CD4-positive, alpha-beta memory T cell (primary cell): ENCODE measurements at regions of chr5 and their contacts with region 1.

Region 1: DNA sequence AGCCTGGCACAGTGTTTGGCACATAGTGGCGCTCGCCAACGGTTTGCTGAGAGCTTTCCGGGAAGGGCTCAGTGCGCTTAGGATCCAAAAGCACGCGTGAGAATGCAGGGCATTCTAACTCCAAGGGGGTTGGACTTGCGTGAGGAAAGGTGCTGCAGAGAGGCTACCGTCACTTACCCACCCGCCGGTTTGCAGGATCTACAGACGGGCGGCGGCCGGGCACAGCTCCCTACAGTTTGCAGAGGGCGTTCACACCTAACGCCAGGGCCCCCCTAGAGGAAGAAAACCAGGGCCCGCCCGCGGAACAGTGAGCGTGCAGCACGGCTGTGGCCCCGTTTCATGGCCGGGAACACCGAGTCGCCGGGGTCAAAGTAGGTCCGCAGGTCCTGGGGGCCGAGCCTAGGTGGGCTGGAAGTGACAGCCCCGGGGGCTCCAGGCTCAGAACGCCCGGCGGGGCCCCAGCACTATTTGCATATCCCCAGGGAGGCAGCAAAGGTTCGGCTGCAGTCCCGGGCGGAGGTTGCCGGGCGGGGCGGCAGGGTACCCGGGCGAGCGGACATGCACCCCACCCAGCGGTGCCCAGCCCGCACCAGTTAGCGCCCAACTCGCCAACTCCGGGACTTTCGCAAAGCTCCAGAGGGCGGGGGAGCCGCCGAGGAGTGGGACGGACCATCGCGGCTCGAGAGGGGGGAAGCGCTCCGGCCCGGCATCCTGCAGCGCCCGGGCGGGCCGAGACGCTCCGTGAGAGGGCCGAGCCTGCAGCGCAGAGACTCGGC is 526 bp upstream of the GALNT10 start:
- DNase-seq: peak; percentile 82 to 87 (median 86)
- H3K4me3 ChIP-seq: peak overlapping the region; percentile 31 to 59
- H3K4me3 Mint-ChIP-seq: peak overlapping the region; percentile 88 to 95 (median 91)
- H3K27ac ChIP-seq: peak overlapping the region; percentile 64
- H3K27ac Mint-ChIP-seq: peak overlapping the region; percentile 68 to 90 (median 84)
- H3K4me1 ChIP-seq: peaks cover 36% of the 10 kb centered on the region
- H3K4me1 Mint-ChIP-seq: peaks cover 33 to 56% (median 42%) of the 10 kb centered on the region in 4 donors
- H3K27me3 ChIP-seq: no peaks in the 10 kb centered on the region
- H3K27me3 Mint-ChIP-seq: no peaks in the 10 kb centered on the region

Region 2: DNA sequence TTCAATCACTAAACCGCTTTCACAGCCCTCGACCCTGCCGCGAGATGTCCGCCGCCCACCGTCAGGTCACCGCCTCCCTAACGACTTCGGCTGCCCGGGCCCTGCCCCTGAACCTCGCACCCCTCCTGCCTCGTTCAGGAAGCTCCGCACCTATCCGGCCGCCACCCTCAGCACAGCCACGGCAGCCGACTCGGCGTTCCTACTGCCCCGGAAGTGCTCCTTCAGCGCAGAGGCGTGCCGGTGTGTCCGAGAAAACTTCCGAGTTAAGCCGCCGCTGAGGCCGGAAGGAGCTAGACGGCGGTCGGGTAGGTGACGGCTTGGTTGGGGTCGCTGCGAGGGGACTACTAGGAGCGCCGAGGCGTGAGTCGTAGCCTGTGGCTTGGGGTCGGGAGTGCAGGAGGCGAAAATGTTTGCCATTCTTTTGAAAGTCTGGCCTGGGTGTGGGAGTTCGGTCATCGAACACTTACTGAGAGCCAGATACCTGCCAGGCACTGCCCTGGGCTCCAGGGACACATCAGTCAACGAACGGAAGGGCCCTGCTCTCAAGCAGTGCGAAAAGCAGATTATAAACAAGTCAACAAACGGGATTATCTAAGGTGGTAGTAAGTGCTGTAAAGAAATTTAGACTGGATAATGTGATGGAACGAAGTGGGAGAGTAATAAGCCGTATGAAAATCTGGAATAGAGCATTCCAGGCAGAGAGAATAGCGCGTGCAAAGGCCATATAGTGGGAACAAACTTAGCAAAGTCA is 151.1 kb before region 1 on chr5 and contains the starts of genes FAM114A2 and MFAP3:
- CTCF ChIA-PET with region 1: interaction called, 9 read pairs
- POLR2A ChIA-PET with region 1: interaction called, 39 read pairs
- intact Hi-C with region 1: loop called (anchors 1 kb)
- DNase-seq: peak; percentile 85 to 91 (median 86)
- H3K4me3 ChIP-seq: peak within 1 kb of the TSS; percentile 59 to 99
- H3K4me3 Mint-ChIP-seq: peak within 1 kb of the TSS; percentile 92 to 99 (median 98)
- H3K27ac ChIP-seq: peak within 1 kb of the TSS; percentile 72
- H3K27ac Mint-ChIP-seq: peak within 1 kb of the TSS; percentile 91 to 99 (median 98)
- H3K4me1 ChIP-seq: peaks cover 44% of the 10 kb centered on the region
- H3K4me1 Mint-ChIP-seq: peaks cover 39 to 59% (median 51%) of the 10 kb centered on the region in 4 donors
- H3K27me3 ChIP-seq: no peaks in the 10 kb centered on the region
- H3K27me3 Mint-ChIP-seq: no peaks in the 10 kb centered on the region
- total RNA-seq, gene FAM114A2: 39.0 to 45.5 TPM
- total RNA-seq, gene MFAP3: 25.4 to 27.4 TPM

Region 3: GRCh38 chr5:154221371-154221896 is 31.4 kb after region 1 on chr5:
- CTCF ChIA-PET with region 1: interaction called, 15 read pairs
- POLR2A ChIA-PET with region 1: interaction called, 26 read pairs
- intact Hi-C with region 1: loop called (anchors 1 kb)
- DNase-seq: peak; percentile 46 to 73 (median 57)
- H3K4me3 ChIP-seq: no peak overlapping the region
- H3K4me3 Mint-ChIP-seq: peak overlapping the region in 5 of 8 donors; percentile 4 to 77 (median 24)
- H3K27ac ChIP-seq: peak overlapping the region; percentile 42
- H3K27ac Mint-ChIP-seq: peak overlapping the region; percentile 75 to 99 (median 96)
- H3K4me1 ChIP-seq: peaks cover 39% of the 10 kb centered on the region
- H3K4me1 Mint-ChIP-seq: peaks cover 33 to 65% (median 51%) of the 10 kb centered on the region in 4 donors
- H3K27me3 ChIP-seq: no peaks in the 10 kb centered on the region
- H3K27me3 Mint-ChIP-seq: no peaks in the 10 kb centered on the region

Region 4: DNA sequence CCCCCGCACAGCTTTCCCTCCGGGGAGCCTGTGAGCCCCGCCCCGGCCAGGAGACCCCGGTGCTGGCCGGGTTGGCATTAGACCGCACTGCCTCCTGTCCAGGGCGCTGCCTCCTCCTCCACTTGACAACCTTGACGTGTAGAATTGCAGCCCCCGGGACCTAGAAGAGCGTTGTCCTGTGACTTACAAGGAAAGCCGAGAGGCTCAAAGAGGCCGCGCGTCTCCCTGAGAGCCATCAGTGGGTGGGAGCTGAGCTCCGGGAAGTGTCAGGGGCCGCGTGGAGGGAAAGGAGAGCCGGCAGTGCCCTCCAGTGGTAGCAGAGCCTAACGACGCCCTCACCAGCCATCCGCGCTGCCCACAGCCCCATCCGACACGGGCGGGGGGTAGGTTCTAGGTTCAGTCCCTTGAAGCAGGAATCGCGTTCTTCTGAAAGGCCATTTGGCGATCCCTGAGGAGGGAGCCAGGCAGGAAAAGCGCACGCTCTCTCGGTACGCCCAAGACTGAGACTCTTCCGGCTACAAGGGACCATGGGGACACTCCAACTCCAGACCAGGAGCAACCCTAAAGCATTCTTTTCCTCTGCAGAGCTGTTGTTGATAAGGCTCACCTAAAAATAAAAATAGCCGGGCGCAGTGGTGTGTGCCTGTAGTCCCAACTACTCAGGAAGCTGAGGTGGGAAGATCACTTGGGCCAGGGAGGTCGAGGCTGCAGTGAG is 215.2 kb after region 1 on chr5:
- CTCF ChIA-PET with region 1: interaction called, 17 read pairs
- POLR2A ChIA-PET with region 1: interaction called, 3 read pairs
- intact Hi-C with region 1: no loop called
- DNase-seq: peak; percentile 56 to 61 (median 59)
- H3K4me3 ChIP-seq: peak overlapping the region in 1 of 2 donors; percentile 14
- H3K4me3 Mint-ChIP-seq: peak overlapping the region in 7 of 8 donors; percentile 27 to 80 (median 43)
- H3K27ac ChIP-seq: no peak overlapping the region
- H3K27ac Mint-ChIP-seq: peak overlapping the region in 3 of 7 donors; percentile 13 to 43 (median 30)
- H3K4me1 ChIP-seq: peaks cover 4% of the 10 kb centered on the region
- H3K4me1 Mint-ChIP-seq: peaks cover 2 to 16% (median 11%) of the 10 kb centered on the region in 4 donors
- H3K27me3 ChIP-seq: no peaks in the 10 kb centered on the region
- H3K27me3 Mint-ChIP-seq: no peaks in the 10 kb centered on the region

Region 5: GRCh38 chr5:154754460-154755360 is 564.7 kb after region 1 on chr5:
- CTCF ChIA-PET with region 1: no interaction called
- POLR2A ChIA-PET with region 1: interaction called, 3 read pairs
- intact Hi-C with region 1: loop called (anchors 5 kb)
- DNase-seq: peak; percentile 99
- H3K4me3 ChIP-seq: peak overlapping the region; percentile 4 to 91
- H3K4me3 Mint-ChIP-seq: peak overlapping the region; percentile 85 to 92 (median 87)
- H3K27ac ChIP-seq: peak overlapping the region; percentile 92
- H3K27ac Mint-ChIP-seq: peak overlapping the region; percentile 90 to 99 (median 97)
- H3K4me1 ChIP-seq: peaks cover 32% of the 10 kb centered on the region
- H3K4me1 Mint-ChIP-seq: peaks cover 27 to 55% (median 39%) of the 10 kb centered on the region in 4 donors
- H3K27me3 ChIP-seq: no peaks in the 10 kb centered on the region
- H3K27me3 Mint-ChIP-seq: no peaks in the 10 kb centered on the region